ENCODE measurements at regions of chr3 and their contacts with region 1.

Region 1: DNA sequence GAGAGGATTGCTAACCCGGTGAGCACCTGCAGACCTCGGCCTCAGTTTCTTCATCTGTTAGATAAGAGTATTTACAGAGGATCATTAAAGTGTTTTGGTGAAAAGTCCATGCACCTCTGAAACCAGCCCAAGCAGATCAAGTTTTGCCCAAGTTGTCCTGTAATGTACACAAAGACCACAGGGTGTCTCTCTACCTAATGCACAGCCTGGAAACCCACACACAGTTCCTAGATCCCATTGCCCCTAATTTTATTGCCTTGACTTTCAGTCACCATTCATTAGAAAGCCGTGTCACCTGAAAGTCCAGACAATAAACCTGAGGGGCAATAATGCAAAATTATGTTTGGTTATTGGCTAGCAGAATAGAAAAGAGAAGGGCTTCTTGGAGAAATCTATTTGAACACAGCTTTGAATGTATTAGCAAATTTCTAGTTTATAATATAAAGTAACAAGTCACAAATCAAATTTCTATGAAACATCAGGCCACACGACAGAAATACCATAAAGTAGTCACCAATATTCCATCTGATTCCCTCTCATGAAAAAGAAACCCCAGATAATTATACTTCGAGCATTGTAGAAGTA is 161.3 kb upstream of the SLC2A2 start:
- DNase-seq: no peak
- ATAC-seq: peak; percentile 59
- H3K4me3 ChIP-seq: no peak overlapping the region
- H3K27ac ChIP-seq: no peak overlapping the region
- H3K4me1 ChIP-seq: peaks cover 42% of the 10 kb centered on the region
- H3K27me3 ChIP-seq: no peaks in the 10 kb centered on the region
- CTCF ChIP-seq: peak; percentile 65 to 77 (median 68)
- EP300 ChIP-seq: no peak
- POLR2A ChIP-seq: no peak
- RAD21 ChIP-seq: peak; percentile 80

Region 2: GRCh38 chr3:171077261-171077660 is 110.5 kb before region 1 on chr3:
- CTCF ChIA-PET with region 1: no interaction called
- POLR2A ChIA-PET with region 1: no interaction called
- RAD21 ChIA-PET with region 1: no interaction called
- SMC1A ChIA-PET with region 1: no interaction called
- in situ Hi-C with region 1: no loop called
- intact Hi-C with region 1: no loop called
- DNase-seq: no peak
- ATAC-seq: no peak
- H3K4me3 ChIP-seq: no peak overlapping the region
- H3K27ac ChIP-seq: no peak overlapping the region
- H3K4me1 ChIP-seq: no peaks in the 10 kb centered on the region
- H3K27me3 ChIP-seq: no peaks in the 10 kb centered on the region
- CTCF ChIP-seq: no peak
- EP300 ChIP-seq: no peak
- POLR2A ChIP-seq: no peak
- RAD21 ChIP-seq: no peak

Region 3: DNA sequence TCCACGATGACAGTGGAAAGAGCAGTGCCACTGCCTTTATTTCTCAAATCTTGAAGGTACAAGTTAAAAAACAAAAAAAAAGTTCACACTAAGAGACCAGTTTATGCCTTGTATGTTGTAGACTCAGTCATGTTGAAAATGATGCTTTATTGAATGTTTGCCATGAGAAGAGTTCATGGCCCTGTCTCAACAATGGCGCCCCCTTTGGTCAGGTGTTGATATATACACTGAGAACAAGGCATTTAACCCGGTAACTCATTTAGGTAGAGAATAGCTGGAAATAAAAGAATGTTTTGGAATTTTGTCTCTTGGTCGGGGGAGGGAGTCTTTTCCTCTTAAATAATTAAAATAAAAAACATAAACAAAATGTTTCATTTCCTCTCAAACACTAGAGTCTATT is 15.7 kb before region 1 on chr3:
- CTCF ChIA-PET with region 1: interaction called, 11 read pairs
- POLR2A ChIA-PET with region 1: interaction called, 3 read pairs
- RAD21 ChIA-PET with region 1: interaction called, 3 read pairs
- SMC1A ChIA-PET with region 1: interaction called, 19 read pairs
- in situ Hi-C with region 1: no loop called
- intact Hi-C with region 1: no loop called
- DNase-seq: no peak
- ATAC-seq: no peak
- H3K4me3 ChIP-seq: no peak overlapping the region
- H3K27ac ChIP-seq: no peak overlapping the region
- H3K4me1 ChIP-seq: no peaks in the 10 kb centered on the region
- H3K27me3 ChIP-seq: no peaks in the 10 kb centered on the region
- CTCF ChIP-seq: peak; percentile 18 to 37 (median 29); a peak in 3 of 6 replicates
- EP300 ChIP-seq: no peak
- POLR2A ChIP-seq: no peak
- RAD21 ChIP-seq: 0 out of 2 replicates have a peak, but pooled peaks have one; percentile 11

Region 4: DNA sequence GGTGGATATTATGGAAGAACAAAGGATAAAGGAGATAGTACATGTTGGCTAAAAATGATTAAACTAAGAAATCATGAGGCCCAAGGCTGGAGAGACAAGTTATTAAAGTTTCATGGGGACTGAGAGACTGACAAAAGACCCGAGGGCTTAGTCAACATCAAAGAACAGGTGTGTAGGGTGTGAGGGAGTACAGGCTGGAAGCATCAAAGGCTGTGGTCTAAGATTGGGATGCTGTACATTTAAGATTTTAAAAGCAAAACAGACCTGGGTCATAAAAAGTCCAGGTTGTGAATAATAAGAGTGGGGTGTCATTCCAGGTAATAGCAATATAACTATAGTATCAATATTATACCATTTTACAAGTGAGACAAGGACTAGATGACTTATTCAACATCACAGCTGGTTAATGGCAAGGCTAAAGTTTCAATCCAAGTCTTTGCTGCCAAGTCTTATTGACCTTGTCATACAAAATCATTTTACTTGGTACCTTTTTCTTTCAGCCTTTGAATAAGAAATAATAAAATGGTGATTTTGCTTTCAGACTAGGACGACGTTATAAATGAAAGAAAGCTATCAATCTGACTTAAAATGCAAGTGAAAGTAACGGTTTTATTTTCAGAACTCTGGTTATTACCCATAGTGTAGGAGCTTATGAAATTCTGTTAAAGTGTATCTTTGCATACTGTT is 60.8 kb after region 1 on chr3:
- CTCF ChIA-PET with region 1: interaction called, 20 read pairs
- POLR2A ChIA-PET with region 1: interaction called, 8 read pairs
- RAD21 ChIA-PET with region 1: interaction called, 6 read pairs
- SMC1A ChIA-PET with region 1: interaction called, 23 read pairs
- in situ Hi-C with region 1: no loop called
- intact Hi-C with region 1: loop called (anchors 10 kb)
- DNase-seq: no peak
- ATAC-seq: peak; percentile 80
- H3K4me3 ChIP-seq: peak overlapping the region; percentile 53
- H3K27ac ChIP-seq: peak overlapping the region; percentile 80
- H3K4me1 ChIP-seq: peaks cover 68% of the 10 kb centered on the region
- H3K27me3 ChIP-seq: no peaks in the 10 kb centered on the region
- CTCF ChIP-seq: no peak
- EP300 ChIP-seq: peak; percentile 80 to 90
- POLR2A ChIP-seq: no peak
- RAD21 ChIP-seq: no peak

Region 5: DNA sequence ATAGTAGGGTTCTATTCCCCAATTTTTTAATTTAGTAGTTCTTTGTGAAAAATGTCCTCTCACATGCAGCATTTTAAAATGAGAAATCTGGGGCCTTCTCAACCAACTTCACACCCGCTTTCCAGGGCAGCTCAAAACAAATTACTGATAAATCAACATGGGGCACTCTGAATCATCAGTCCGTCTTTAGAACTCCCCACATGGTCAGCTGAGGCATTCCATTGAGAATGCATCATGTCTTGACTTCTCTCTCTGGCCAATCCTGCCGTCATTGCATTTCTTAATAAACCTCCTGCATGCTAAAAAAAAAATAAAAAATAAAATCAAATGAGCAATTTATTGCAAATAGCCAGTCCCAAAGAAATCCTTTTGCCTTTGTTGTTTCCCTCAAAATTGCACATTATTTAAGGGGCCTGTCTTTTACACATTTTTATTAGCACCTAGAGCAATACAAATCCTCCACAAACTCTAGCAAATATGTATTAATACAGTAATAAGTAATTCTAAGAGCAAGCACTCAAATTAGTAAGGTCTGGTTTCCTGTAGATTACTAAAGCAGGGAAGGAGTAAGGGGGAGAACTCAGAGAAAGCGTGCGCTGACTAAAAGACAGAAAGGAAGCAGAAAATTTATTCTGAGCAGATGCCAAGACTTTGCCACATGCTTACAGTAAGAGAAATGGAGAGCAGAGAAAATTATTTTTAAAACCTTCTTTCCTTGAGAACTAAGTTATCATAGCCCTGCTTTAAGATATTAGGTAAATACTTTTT is 96.7 kb after region 1 on chr3:
- CTCF ChIA-PET with region 1: interaction called, 5 read pairs
- POLR2A ChIA-PET with region 1: interaction called, 3 read pairs
- RAD21 ChIA-PET with region 1: interaction called, 7 read pairs
- SMC1A ChIA-PET with region 1: interaction called, 65 read pairs
- in situ Hi-C with region 1: no loop called
- intact Hi-C with region 1: loop called (anchors 2 kb)
- DNase-seq: peak; percentile 76
- ATAC-seq: peak; percentile 64
- H3K4me3 ChIP-seq: peak overlapping the region; percentile 36; the same call in 1 of the 2 replicates
- H3K27ac ChIP-seq: peak overlapping the region; percentile 96
- H3K4me1 ChIP-seq: peaks cover 61% of the 10 kb centered on the region
- H3K27me3 ChIP-seq: no peaks in the 10 kb centered on the region
- CTCF ChIP-seq: no peak
- EP300 ChIP-seq: peak in 1 of 2 experiments; percentile 21; a peak in 1 of 4 replicates
- POLR2A ChIP-seq: no peak
- RAD21 ChIP-seq: no peak

Region 6: GRCh38 chr3:171410186-171410585 is 222.4 kb after region 1 on chr3:
- CTCF ChIA-PET with region 1: no interaction called
- POLR2A ChIA-PET with region 1: no interaction called
- RAD21 ChIA-PET with region 1: no interaction called
- SMC1A ChIA-PET with region 1: interaction called, 11 read pairs
- in situ Hi-C with region 1: no loop called
- intact Hi-C with region 1: no loop called
- DNase-seq: no peak
- ATAC-seq: no peak
- H3K4me3 ChIP-seq: no peak overlapping the region
- H3K27ac ChIP-seq: no peak overlapping the region
- H3K4me1 ChIP-seq: peaks cover 21% of the 10 kb centered on the region
- H3K27me3 ChIP-seq: no peaks in the 10 kb centered on the region
- CTCF ChIP-seq: no peak
- EP300 ChIP-seq: no peak
- POLR2A ChIP-seq: no peak
- RAD21 ChIP-seq: no peak

Region 7: GRCh38 chr3:171459942-171460724 is 272.3 kb after region 1 on chr3 and contains the start of gene TNIK:
- CTCF ChIA-PET with region 1: interaction called, 13 read pairs
- POLR2A ChIA-PET with region 1: interaction called, 8 read pairs
- RAD21 ChIA-PET with region 1: interaction called, 11 read pairs
- SMC1A ChIA-PET with region 1: interaction called, 20 read pairs
- in situ Hi-C with region 1: loop called (anchors 5 kb)
- intact Hi-C with region 1: loop called (anchors 1 kb)
- DNase-seq: peak; percentile 95
- ATAC-seq: peak; percentile 85
- H3K4me3 ChIP-seq: peak within 1 kb of the TSS; percentile 98
- H3K27ac ChIP-seq: peak within 1 kb of the TSS; percentile 80
- H3K4me1 ChIP-seq: peaks cover 10% of the 10 kb centered on the region
- H3K27me3 ChIP-seq: no peaks in the 10 kb centered on the region
- CTCF ChIP-seq: peak in 2 of 3 experiments; percentile 26 to 44; a peak in 2 of 6 replicates
- EP300 ChIP-seq: peak; percentile 40 to 60; a peak in 2 of 4 replicates
- POLR2A ChIP-seq: peak; percentile 91
- RAD21 ChIP-seq: peak; percentile 23; the same call in 1 of the 2 replicates
- polyA plus RNA-seq, gene TNIK: 13.9 to 15.9 TPM

Region 8: GRCh38 chr3:171753665-171754408 is 566.0 kb after region 1 on chr3:
- CTCF ChIA-PET with region 1: no interaction called
- POLR2A ChIA-PET with region 1: no interaction called
- RAD21 ChIA-PET with region 1: no interaction called
- SMC1A ChIA-PET with region 1: no interaction called
- in situ Hi-C with region 1: no loop called
- intact Hi-C with region 1: no loop called
- DNase-seq: no peak
- ATAC-seq: peak; percentile 13; the same call in 2 of the 3 replicates
- H3K4me3 ChIP-seq: no peak overlapping the region
- H3K27ac ChIP-seq: no peak overlapping the region; the same call in 1 of the 2 replicates
- H3K4me1 ChIP-seq: no peaks in the 10 kb centered on the region; the same call in 1 of the 2 replicates
- H3K27me3 ChIP-seq: peaks cover 0 to 3% of the 10 kb centered on the region in 2 experiments; a peak in 1 of 4 replicates
- CTCF ChIP-seq: no peak
- EP300 ChIP-seq: no peak
- POLR2A ChIP-seq: no peak
- RAD21 ChIP-seq: no peak